Mammary epithelial cell (primary cell): ENCODE measurements at regions of chr6 and their contacts with region 1.

Region 1: GRCh38 chr6:167711768-167712730 is 114.7 kb upstream of the AFDN start:
- DNase-seq: no peak
- H3K4me3 ChIP-seq: no peak overlapping the region
- H3K27ac ChIP-seq: no peak overlapping the region
- H3K4me1 ChIP-seq: no peaks in the 10 kb centered on the region
- H3K27me3 ChIP-seq: no peaks in the 10 kb centered on the region
- CTCF ChIP-seq: no peak

Region 2: DNA sequence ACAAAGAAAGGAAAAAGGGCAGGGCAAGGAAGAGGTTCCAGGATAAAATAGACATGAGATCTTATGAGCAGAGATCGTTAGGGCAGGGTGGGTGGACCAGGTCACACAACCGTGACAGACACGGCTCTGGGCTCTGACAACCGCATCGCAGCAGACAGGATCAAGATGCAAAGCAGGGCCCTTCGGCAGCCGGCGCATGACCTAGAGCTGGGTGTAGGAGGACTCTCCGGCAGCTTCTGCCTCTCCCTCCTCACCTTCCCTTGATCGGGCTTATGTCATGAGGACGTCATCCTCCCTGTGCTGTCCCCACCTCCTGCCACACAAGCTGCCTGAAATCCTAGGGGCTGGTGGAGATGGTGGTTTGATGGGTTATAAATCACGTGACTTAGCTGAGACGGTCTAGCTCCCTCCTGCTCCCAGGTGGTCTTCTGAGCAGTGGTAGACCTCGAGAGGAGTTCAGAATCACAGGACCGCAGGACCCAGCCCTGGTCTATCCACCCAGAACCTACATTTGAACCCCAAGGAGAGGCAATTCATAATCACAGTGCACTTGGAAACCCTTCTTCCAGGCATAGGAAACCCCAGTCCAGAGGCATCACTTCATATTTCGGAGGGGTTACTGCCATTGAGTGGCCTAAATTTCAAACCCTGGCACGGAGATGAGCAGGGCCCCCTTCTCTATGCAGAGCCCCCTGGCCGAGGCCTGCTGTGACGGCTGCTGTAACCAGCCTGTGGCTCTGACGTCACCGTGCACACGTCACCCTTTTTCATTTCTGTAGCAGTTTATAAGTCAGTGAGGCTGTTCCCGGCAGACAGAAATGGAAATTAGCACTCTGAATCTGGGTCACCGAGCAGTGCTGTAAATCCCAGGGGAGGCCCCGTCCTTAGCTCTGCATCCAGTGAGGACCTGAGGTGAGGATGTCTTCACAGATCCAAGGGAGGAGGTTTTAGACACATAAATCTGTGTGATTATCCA is 597.8 kb before region 1 on chr6:
- CTCF ChIA-PET with region 1: no interaction called
- dilution Hi-C with region 1: no loop called
- in situ Hi-C with region 1: no loop called
- intact Hi-C with region 1: no loop called
- DNase-seq: no peak
- H3K4me3 ChIP-seq: no peak overlapping the region
- H3K27ac ChIP-seq: no peak overlapping the region
- H3K4me1 ChIP-seq: no peaks in the 10 kb centered on the region
- H3K27me3 ChIP-seq: no peaks in the 10 kb centered on the region
- CTCF ChIP-seq: no peak

Region 3: DNA sequence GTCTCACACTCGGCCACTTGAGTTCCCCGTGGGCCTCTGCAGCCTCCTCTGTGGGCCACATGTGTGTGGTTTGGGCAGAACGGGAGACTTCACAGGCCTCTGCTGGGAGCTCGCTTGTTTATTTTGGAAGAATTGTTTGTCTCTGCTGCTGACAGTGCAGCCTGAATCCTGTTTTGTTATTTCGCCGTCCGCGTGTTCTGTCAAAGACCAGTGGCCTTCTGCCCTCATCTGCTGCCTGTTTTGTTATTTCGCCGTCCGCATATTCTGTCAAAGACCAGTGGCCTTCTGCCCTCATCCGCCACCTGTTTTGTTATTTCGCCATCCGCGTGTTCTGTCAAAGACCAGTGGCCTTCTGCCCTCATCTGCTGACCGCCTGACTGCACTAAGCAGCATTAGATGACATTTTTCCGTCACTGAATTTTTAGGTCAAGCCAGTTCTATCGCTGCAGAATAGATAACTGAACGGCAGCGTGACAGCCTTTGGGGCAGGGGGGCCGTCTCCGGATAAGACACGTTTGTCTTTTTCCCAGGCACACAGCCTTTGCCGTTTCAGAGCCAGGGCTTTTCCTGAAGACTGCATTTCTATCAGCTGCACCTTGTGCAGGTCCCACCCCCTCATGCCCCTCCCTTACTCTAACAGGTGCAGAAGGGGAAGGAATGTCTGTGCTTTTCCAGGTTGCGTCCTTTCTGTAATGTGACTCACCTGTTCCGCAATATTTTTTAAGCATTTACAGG is 43.9 kb before region 1 on chr6:
- CTCF ChIA-PET with region 1: no interaction called
- dilution Hi-C with region 1: loop called (anchors 5 kb)
- in situ Hi-C with region 1: no loop called
- intact Hi-C with region 1: no loop called
- DNase-seq: no peak
- H3K4me3 ChIP-seq: no peak overlapping the region
- H3K27ac ChIP-seq: no peak overlapping the region
- H3K4me1 ChIP-seq: no peaks in the 10 kb centered on the region
- H3K27me3 ChIP-seq: no peaks in the 10 kb centered on the region
- CTCF ChIP-seq: no peak

Region 4: DNA sequence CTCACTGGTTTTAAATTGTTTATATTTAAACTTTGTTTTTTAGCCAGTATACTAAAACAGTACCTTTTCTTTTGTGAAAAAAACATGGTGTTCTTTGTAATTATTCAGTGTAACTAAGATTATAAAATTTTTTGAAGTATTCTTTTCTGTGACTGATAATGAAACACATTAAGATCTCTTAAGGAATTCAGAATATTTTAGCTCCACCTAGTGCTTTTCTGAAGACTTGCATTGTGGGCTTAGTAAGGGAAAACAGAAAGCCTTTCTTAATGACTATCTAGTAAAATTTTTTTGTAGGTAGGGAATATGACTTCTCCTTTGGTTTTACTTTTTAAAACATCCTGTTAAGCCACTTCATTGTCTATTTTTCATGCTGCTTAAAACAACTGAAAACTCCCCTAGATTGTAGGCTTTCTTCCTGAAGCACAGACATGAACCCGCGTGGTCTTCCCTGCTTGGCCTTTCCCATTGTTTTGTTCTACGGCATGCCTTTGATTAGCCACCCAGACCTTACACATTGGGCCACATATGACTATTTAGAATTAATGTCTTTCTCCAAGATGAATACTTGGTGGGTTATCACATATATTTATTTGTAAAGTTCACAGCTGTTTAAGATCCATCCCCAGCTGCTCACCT is 186.7 kb after region 1 on chr6:
- CTCF ChIA-PET with region 1: no interaction called
- dilution Hi-C with region 1: no loop called
- in situ Hi-C with region 1: no loop called
- intact Hi-C with region 1: loop called (anchors 10 kb)
- DNase-seq: peak; percentile 14
- H3K4me3 ChIP-seq: no peak overlapping the region
- H3K27ac ChIP-seq: no peak overlapping the region
- H3K4me1 ChIP-seq: peaks cover 6% of the 10 kb centered on the region
- H3K27me3 ChIP-seq: no peaks in the 10 kb centered on the region
- CTCF ChIP-seq: peak; percentile 61 to 65